WTC11 (cell line): ENCODE measurements at regions of chr2 and their contacts with region 1.

Region 1: GRCh38 chr2:172095146-172095904 is 7.4 kb downstream of the DLX2 start:
- DNase-seq: peak; percentile 79
- ATAC-seq: peak; percentile 26
- H3K4me3 Mint-ChIP-seq: peak overlapping the region; percentile 72
- H3K27ac Mint-ChIP-seq: no peak overlapping the region
- H3K4me1 Mint-ChIP-seq: peaks cover 53% of the 10 kb centered on the region
- H3K27me3 Mint-ChIP-seq: peaks cover 100% of the 10 kb centered on the region
- CTCF ChIP-seq: no peak

Region 2: DNA sequence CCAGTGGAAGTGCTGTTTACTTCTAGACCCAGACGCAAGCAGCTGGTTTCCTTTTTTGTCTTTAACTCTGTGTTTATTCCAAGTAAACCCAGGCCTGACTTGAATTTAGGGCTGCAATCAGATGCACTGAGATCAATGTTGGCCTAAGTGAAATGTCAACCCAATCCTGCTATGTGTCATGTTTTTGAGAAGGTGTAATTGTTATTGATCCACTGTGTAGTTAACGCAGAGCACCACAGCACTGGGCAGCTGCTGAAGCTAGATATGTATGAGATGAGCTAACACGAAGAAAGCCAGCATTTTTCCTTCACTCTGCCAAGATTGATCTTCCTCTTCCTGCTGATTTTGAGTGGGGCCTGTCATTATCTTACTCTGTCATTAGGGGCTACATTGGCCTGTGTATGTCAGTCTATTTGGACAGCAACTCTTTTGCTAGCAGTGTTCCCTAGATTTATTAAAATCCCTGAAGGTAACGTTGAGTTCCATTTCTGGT is 28.9 kb before region 1 on chr2:
- CTCF ChIA-PET with region 1: no interaction called
- POLR2A ChIA-PET with region 1: no interaction called
- DNase-seq: no peak
- ATAC-seq: no peak
- H3K4me3 Mint-ChIP-seq: no peak overlapping the region
- H3K27ac Mint-ChIP-seq: no peak overlapping the region; the same call in 1 of the 2 replicates
- H3K4me1 Mint-ChIP-seq: no peaks in the 10 kb centered on the region
- H3K27me3 Mint-ChIP-seq: no peaks in the 10 kb centered on the region
- CTCF ChIP-seq: no peak

Region 3: GRCh38 chr2:172084734-172085459 is 10.4 kb before region 1 on chr2:
- CTCF ChIA-PET with region 1: interaction called, 33 read pairs
- POLR2A ChIA-PET with region 1: interaction called, 13 read pairs
- DNase-seq: peak; percentile 92
- ATAC-seq: peak; percentile 77
- H3K4me3 Mint-ChIP-seq: peak overlapping the region; percentile 87
- H3K27ac Mint-ChIP-seq: no peak overlapping the region
- H3K4me1 Mint-ChIP-seq: peaks cover 81% of the 10 kb centered on the region
- H3K27me3 Mint-ChIP-seq: peaks cover 100% of the 10 kb centered on the region
- CTCF ChIP-seq: no peak

Region 4: DNA sequence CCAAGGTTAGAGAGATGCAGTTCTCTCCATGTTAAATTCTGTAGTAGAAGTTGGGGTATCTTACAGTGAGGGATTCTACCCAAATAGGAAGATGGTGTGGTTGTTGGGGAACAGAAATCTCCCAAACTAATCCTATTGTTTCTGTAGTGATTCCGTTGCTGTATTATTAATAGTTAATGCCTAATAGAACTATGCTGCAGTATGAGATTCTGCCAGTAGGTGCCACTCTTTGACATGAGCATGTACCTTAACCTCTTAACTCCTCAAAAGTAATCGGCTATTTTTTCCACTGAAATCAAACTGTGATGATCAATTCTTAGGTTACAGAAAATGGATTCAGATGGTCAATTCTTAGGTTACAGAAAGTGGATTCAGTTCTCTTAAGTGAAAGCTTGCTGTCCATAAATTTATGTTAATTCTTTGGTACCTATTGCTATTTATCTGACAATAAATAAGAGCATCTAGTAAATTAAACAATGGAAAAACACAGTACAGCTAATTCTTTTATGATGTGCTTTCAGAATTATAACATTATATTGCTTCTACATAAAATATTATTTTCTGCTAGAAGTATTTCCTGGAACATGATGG is 105.3 kb after region 1 on chr2:
- CTCF ChIA-PET with region 1: no interaction called
- POLR2A ChIA-PET with region 1: no interaction called
- DNase-seq: peak; percentile 33
- ATAC-seq: no peak
- H3K4me3 Mint-ChIP-seq: no peak overlapping the region
- H3K27ac Mint-ChIP-seq: no peak overlapping the region
- H3K4me1 Mint-ChIP-seq: peaks cover 11% of the 10 kb centered on the region
- H3K27me3 Mint-ChIP-seq: peaks cover 3% of the 10 kb centered on the region; the same call in 1 of the 2 replicates
- CTCF ChIP-seq: peak; percentile 49